Naive thymus-derived CD8-positive, alpha-beta T cell (primary cell): ENCODE measurements at regions of chr2 and their contacts with region 1.

Region 1: DNA sequence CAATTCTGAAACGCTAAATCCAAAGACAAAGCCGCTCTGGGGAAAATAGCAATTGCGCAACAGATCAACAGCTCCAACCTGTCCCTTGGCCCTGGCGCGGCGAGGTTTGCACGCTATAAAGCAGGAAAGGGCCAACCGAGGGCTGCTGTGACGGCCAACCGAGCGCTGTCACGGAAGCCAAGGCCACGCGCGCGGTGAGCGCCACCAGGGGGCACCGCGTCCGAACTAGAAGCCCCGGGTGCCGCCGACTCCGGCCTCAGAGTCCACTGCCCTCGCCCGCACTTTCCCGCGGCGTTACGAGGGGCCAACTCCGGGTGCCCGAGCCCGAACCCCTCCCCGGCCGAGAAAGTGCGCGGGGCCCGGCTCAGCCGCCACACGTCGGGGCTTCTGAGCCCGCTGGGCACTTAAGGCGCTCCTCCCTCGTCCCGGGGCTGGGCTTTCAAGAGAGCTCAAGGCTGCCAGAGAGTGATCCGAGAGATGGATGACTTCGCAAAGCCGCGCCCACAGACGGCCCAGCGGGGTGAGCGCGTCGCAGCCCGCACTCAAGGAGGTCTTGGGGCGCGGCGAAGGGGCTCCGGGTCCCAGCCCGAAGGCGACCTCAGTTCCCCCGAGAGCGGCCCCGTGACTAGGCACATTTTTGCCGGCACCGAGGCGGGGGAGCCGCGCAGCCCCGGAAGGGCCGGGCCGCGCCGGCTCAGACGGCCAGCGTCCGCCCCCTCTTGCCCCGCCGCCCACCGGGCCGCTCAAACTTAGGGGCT is 897 bp downstream of the NFE2L2 start:
- DNase-seq: peak; percentile 86 to 98 (median 94)
- ATAC-seq: peak; percentile 68 to 69
- H3K4me3 Mint-ChIP-seq: peak overlapping the region; percentile 90 to 99 (median 96)
- H3K27ac Mint-ChIP-seq: peak overlapping the region; percentile 89 to 100 (median 96)
- H3K4me1 Mint-ChIP-seq: peaks cover 16 to 61% (median 52%) of the 10 kb centered on the region in 4 donors
- H3K27me3 Mint-ChIP-seq: no peaks in the 10 kb centered on the region

Region 2: DNA sequence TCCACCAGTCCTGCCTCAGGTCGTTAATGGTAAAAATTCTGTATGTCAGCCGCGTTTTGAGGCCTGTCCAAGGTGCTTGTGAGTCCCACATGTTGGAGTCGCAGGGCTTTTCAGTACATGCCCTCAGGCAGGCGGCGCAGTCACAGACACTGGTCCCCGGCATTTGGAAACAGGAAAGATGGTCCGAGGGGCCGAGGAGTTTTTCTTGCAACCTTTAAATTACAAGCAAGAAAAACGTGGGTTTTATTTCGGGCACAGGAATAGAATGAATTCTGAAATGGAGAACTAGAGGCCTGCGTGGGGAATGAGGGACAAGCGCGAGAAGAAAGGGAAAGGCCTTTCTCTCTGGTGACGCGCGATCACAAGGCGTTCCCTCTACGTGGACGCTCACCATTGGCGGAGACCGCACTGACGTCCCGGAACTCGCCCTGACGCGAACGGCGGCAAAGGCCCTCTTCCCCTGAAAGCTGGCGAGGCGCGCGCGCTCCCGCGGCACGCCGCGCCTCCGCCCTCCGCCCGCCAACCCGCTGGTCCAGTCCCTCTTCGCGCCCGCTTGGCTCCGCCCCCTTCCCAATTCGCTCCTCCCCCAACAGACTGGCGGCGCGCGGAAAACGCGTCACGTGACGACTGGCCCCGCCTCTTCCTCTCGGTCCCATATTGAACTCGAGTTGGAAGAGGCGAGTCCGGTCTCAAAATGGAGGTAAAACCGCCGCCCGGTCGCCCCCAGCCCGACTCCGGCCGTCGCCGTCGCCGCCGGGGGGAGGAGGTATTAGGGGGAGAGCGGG is 51.3 kb before region 1 on chr2 and contains the start of gene HNRNPA3:
- POLR2A ChIA-PET with region 1: interaction called, 147 read pairs
- DNase-seq: peak; percentile 99 to 100 (median 100)
- ATAC-seq: peak; percentile 83 to 84
- H3K4me3 Mint-ChIP-seq: peak within 1 kb of the TSS; percentile 80 to 98 (median 96)
- H3K27ac Mint-ChIP-seq: peak within 1 kb of the TSS; percentile 98 to 100 (median 99)
- H3K4me1 Mint-ChIP-seq: peaks cover 21 to 57% (median 40%) of the 10 kb centered on the region in 4 donors
- H3K27me3 Mint-ChIP-seq: peaks cover 0 to 4% (median 0%) of the 10 kb centered on the region in 5 donors
- polyA plus RNA-seq, gene HNRNPA3: 47.6 to 56.6 (median 52.1) TPM

Region 3: DNA sequence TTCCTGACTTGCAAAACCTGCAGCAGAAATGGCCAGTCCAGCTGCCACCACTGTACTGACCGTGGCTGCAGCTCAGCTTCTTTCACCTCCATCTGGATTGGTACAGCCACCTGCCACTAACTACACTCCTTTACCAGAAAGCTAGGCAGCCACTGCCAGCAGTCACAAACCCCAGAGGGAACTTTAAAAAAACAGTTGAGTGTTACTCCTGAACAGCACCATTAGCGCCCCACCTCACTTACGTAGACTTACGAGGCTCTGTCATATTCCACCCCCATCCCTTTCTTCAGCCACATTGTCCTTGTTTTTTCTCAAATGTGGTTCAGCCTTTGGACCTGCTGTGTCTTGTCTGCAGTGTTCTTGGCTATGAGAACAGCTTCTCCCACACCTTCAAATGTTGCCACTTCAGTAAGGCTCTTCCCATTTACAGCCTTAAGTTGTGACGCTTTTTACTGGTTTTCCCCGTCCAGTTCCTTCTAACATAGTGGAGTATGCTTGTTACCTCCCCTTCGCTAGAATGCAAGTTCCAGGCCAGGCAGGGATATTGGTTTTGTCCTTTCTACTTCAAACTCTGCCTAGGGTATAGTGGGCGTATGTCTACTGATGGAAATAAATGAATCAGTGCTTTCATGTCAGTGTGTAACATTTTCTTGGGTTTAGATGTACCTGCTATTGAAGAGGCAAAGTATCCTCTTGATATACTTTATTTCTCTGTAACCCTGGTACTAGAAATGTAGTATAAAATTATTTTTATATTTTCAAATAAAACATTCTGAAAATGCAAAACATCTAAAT is 34.0 kb before region 1 on chr2:
- POLR2A ChIA-PET with region 1: interaction called, 47 read pairs
- DNase-seq: no peak
- ATAC-seq: peak in 1 of 2 donors; percentile 10
- H3K4me3 Mint-ChIP-seq: peak overlapping the region in 1 of 10 donors; percentile 43
- H3K27ac Mint-ChIP-seq: peak overlapping the region; percentile 39 to 85 (median 71)
- H3K4me1 Mint-ChIP-seq: peaks cover 26 to 51% (median 40%) of the 10 kb centered on the region in 4 donors
- H3K27me3 Mint-ChIP-seq: no peaks in the 10 kb centered on the region

Region 4: DNA sequence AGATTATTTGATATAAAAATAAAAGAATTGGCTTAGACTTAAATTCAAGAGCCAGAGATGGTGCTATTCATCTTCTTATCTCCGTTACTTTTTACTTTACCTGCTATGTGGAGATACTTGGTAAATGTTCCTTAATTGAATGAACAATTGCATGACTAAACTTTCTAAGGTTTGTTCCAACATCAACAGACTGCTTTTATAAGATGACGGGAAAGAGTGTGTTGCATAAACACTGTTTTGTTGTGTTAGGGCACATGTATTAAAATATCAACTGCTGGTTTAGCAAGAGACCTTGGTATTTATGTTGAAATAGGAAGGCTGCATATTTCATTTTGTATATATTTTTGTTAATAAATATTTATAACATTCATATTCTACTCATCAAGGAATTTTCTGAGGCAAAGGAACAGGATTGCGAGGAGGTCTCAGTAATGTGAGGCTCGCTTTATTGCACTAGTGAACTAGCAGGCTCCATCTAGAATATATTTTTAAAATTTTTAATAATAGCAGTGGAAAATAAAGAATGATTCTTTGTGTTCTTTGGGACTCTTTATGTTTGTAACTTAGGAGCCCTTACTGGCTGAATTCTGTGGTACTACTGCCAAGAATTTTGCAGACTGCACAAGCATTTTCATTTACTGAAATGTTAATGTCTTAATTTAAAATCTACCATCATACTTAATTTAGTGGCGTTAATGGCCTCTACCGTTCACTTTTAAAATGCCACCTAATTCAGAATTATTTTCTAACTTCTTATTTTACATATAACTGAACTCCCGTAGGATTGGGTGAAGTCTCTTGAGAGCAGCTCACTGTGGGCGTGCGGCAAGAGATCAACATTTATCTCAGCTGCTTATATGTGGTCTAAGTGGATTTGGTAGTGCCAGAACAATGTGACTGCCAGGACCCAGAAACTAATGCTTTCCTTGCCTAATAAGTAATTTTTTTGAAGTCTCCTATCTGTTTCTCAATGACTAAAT is 11.7 kb after region 1 on chr2:
- POLR2A ChIA-PET with region 1: interaction called, 32 read pairs
- DNase-seq: no peak
- ATAC-seq: no peak
- H3K4me3 Mint-ChIP-seq: no peak overlapping the region
- H3K27ac Mint-ChIP-seq: peak overlapping the region in 1 of 10 donors; percentile 71
- H3K4me1 Mint-ChIP-seq: peaks cover 0 to 4% (median 0%) of the 10 kb centered on the region in 4 donors
- H3K27me3 Mint-ChIP-seq: no peaks in the 10 kb centered on the region

Region 5: GRCh38 chr2:177289824-177290628 is 26.4 kb after region 1 on chr2:
- POLR2A ChIA-PET with region 1: interaction called, 123 read pairs
- DNase-seq: peak in 3 of 10 donors; percentile 19 to 34 (median 19)
- ATAC-seq: peak; percentile 72 to 76
- H3K4me3 Mint-ChIP-seq: peak overlapping the region; percentile 40 to 81 (median 72)
- H3K27ac Mint-ChIP-seq: peak overlapping the region; percentile 76 to 93 (median 90)
- H3K4me1 Mint-ChIP-seq: peaks cover 12 to 31% (median 26%) of the 10 kb centered on the region in 4 donors
- H3K27me3 Mint-ChIP-seq: no peaks in the 10 kb centered on the region

Region 6: DNA sequence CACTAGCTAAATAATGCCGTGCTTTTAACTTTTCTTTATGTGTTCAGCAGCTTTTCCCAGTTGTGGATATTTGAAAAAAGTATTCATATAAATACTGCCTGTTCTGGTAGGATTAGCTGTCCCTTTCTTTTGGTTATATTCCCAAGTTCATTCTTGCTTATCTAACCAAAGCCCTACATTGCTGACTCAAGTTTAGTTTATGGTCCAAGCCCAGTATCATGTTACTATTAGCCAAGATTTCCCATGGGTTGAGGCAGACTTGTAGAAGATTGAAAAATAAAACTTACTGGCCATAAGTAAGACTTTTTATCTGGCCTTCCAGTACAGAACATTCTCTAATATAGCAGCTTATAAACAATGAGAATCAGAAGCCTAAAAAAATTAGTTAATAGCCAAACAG is 50.6 kb after region 1 on chr2:
- POLR2A ChIA-PET with region 1: interaction called, 213 read pairs
- DNase-seq: no peak
- ATAC-seq: no peak
- H3K4me3 Mint-ChIP-seq: no peak overlapping the region
- H3K27ac Mint-ChIP-seq: peak overlapping the region in 5 of 10 donors; percentile 29 to 85 (median 65)
- H3K4me1 Mint-ChIP-seq: peaks cover 13 to 35% (median 26%) of the 10 kb centered on the region in 4 donors
- H3K27me3 Mint-ChIP-seq: no peaks in the 10 kb centered on the region

Region 7: GRCh38 chr2:177344316-177344715 is 80.7 kb after region 1 on chr2:
- POLR2A ChIA-PET with region 1: no interaction called
- DNase-seq: no peak
- ATAC-seq: no peak
- H3K4me3 Mint-ChIP-seq: no peak overlapping the region
- H3K27ac Mint-ChIP-seq: no peak overlapping the region
- H3K4me1 Mint-ChIP-seq: no peaks in the 10 kb centered on the region
- H3K27me3 Mint-ChIP-seq: no peaks in the 10 kb centered on the region

Region 8: GRCh38 chr2:177392373-177393202 is 129.0 kb after region 1 on chr2 and contains the start of gene AGPS:
- POLR2A ChIA-PET with region 1: interaction called, 32 read pairs
- DNase-seq: peak; percentile 63 to 83 (median 69)
- ATAC-seq: peak; percentile 89 to 92
- H3K4me3 Mint-ChIP-seq: peak within 1 kb of the TSS; percentile 87 to 97 (median 92)
- H3K27ac Mint-ChIP-seq: peak within 1 kb of the TSS; percentile 79 to 96 (median 92)
- H3K4me1 Mint-ChIP-seq: peaks cover 33 to 65% (median 52%) of the 10 kb centered on the region in 4 donors
- H3K27me3 Mint-ChIP-seq: no peaks in the 10 kb centered on the region
- polyA plus RNA-seq, gene AGPS: 13.0 to 16.3 (median 13.2) TPM